ENCODE measurements at regions of chr10 and their contacts with region 1.

Region 1: DNA sequence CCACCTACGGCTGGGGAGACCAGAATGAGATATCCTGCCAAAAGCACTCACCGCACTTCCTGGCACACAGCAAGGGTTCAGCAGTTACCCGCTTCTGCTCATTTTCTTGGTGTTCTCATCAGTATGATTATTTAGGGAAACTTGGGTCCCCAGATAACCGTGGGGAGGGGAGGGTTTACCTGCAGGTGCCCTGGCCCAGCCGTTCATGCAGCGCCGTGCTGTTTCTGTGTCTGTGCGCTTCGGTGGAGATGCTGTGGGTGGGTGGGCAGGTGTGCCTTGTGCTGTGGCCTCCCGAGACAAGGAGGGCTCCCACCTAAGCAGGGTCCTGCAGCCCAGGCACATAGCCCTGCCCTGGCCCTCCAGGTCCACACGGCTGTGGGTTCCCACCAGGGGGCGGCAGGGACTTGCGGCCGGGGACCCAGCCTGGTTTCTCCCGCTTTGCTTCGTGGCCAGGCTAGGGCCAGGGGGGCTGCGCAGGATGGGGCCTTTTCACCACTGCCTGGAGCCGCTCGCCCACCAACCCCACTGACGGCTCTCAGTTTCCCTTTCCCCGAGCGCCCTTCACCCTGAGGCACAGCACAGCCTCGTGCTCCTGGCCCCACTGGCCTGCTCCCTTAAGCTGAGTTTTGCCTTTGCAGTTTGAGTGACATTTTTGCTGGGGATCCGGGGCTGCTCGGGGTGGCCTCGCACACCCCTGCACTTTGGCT is 78.5 kb downstream of the LHPP start:
- DNase-seq: peak; percentile 22
- ATAC-seq: peak; percentile 88
- H3K4me3 ChIP-seq: peak overlapping the region in 1 of 3 experiments; percentile 1; a peak in 1 of 6 replicates
- H3K27ac ChIP-seq: no peak overlapping the region
- H3K4me1 ChIP-seq: peaks cover 10% of the 10 kb centered on the region; the same call in 1 of the 2 replicates
- H3K27me3 ChIP-seq: peaks cover 0 to 1% of the 10 kb centered on the region in 2 experiments; a peak in 1 of 5 replicates
- CTCF ChIP-seq: peak; percentile 97
- EP300 ChIP-seq: no peak
- POLR2A ChIP-seq: no peak
- RAD21 ChIP-seq: peak; percentile 95

Region 2: DNA sequence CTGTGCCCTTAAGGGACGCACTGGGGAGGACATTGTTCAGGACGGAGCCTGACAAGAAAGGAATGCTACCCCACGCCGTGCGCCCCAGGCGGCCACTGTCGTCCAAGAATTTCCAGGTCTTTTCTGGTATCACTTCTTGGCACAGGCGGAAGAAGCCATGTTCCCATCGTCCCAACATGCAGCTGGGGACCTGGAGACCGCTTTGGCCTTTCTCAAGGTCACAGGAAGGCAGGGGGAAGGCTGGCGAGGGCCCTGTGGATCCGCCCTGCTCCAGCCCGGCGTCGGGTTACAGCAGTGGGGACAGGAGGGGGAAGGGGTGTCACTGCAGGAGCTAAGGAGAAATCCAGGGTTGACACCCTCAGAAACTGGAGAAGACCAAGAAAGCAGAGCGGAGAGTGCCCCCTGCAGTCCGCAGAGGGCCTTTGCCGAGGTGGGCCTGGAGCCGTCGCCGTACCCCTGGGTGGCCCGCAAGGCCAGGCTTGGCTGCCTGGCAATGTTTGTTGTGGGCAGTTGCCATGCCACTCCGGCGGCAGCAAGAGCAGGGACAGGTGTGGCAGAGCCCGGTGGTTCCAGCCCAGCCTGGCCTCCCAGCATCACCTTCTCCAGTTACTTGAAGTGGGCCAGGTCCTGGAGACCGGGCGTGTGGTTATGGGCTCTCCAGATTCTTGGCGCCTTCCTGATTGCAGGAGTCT is 25.6 kb after region 1 on chr10:
- CTCF ChIA-PET with region 1: interaction called, 21 read pairs
- POLR2A ChIA-PET with region 1: no interaction called
- in situ Hi-C with region 1: no loop called
- intact Hi-C with region 1: loop called (anchors 2 kb)
- DNase-seq: peak; percentile 69
- ATAC-seq: peak; percentile 89
- H3K4me3 ChIP-seq: peak overlapping the region in 1 of 3 experiments; percentile 9; a peak in 1 of 6 replicates
- H3K27ac ChIP-seq: no peak overlapping the region
- H3K4me1 ChIP-seq: peaks cover 20% of the 10 kb centered on the region
- H3K27me3 ChIP-seq: peaks cover 0 to 11% of the 10 kb centered on the region in 2 experiments; a peak in 1 of 5 replicates
- CTCF ChIP-seq: peak; percentile 85
- EP300 ChIP-seq: no peak
- POLR2A ChIP-seq: no peak
- RAD21 ChIP-seq: peak; percentile 88

Region 3: GRCh38 chr10:124604214-124605000 is 64.3 kb after region 1 on chr10:
- CTCF ChIA-PET with region 1: interaction called, 6 read pairs
- POLR2A ChIA-PET with region 1: no interaction called
- in situ Hi-C with region 1: no loop called
- intact Hi-C with region 1: loop called (anchors 2 kb)
- DNase-seq: no peak
- ATAC-seq: no peak
- H3K4me3 ChIP-seq: no peak overlapping the region
- H3K27ac ChIP-seq: no peak overlapping the region
- H3K4me1 ChIP-seq: peaks cover 54% of the 10 kb centered on the region
- H3K27me3 ChIP-seq: no peaks in the 10 kb centered on the region
- CTCF ChIP-seq: no peak
- EP300 ChIP-seq: no peak
- POLR2A ChIP-seq: no peak
- RAD21 ChIP-seq: no peak